A549 (cell line): ENCODE measurements at regions of chr19 and their contacts with region 1.

Region 1: GRCh38 chr19:47745010-47745901 is at the start of gene NOP53:
- DNase-seq: peak; percentile 99
- ATAC-seq: peak; percentile 64 to 75
- H3K4me3 ChIP-seq: peak within 1 kb of the TSS; percentile 56
- H3K27ac ChIP-seq: peak within 1 kb of the TSS; percentile 95 to 96
- H3K4me1 ChIP-seq: peaks cover 33% of the 10 kb centered on the region
- CTCF ChIP-seq: no peak
- EP300 ChIP-seq: no peak
- POLR2A ChIP-seq: peak; percentile 76
- RAD21 ChIP-seq: no peak
- polyA plus RNA-seq, gene NOP53: 169 and 182 TPM in 2 replicates

Region 2: GRCh38 chr19:47713046-47714021 is 31.9 kb before region 1 on chr19 and contains the start of gene EHD2:
- CTCF ChIA-PET with region 1: interaction called, 1,389 read pairs
- POLR2A ChIA-PET with region 1: interaction called, 69 read pairs
- DNase-seq: peak; percentile 69 to 84
- ATAC-seq: peak; percentile 83 to 92
- H3K4me3 ChIP-seq: peak within 1 kb of the TSS; percentile 89
- H3K27ac ChIP-seq: peak within 1 kb of the TSS; percentile 97 to 99
- H3K4me1 ChIP-seq: peaks cover 4% of the 10 kb centered on the region
- CTCF ChIP-seq: peak; percentile 99
- EP300 ChIP-seq: no peak
- POLR2A ChIP-seq: peak; percentile 82
- RAD21 ChIP-seq: peak; percentile 99 to 100
- polyA plus RNA-seq, gene EHD2: 32.3 and 36.9 TPM in 2 replicates

Region 3: DNA sequence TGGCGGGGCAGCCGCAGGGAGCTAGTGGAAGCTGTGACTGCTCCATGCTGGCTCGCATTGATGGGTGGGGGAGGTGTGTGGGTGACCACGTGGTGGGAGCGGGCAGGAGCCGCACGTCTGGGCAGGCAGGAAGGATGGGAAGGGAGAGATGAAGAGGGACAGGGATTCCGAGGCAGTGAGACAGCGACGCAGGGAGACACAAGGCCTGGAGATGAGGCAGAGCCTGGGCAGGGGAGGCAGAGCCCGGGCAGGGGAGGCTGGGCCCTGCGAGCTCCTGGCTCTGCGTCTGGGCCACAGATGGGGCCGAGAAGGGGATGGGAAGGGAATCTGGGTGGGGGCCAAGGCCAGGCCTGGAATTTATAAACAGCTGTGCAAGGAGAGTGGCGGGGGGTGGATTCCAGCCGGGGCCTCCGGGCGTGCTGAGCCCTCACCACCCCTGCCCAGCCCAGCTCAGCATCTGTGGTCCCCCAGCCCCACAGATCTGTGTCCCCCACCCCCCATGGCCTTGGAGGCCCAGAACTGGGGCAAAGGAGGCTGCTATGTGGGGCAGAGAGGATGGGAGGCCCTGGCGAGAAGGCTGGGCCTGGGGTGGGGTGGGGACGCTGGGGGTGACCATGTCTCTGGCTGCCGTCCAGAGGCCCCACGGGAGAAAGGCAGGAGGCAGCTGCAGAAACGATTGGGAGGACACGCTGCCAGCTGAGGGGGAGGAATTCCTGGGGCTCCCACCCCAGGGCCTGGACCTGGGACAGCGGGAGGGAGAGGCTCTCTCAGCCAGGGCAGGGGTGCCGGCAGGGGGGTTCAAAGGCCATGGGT is 26.0 kb before region 1 on chr19:
- CTCF ChIA-PET with region 1: interaction called, 1,389 read pairs
- POLR2A ChIA-PET with region 1: interaction called, 69 read pairs
- DNase-seq: peak; percentile 79 to 91
- ATAC-seq: peak; percentile 85 to 86
- H3K4me3 ChIP-seq: peak overlapping the region; percentile 17; the same call in 2 of the 3 replicates
- H3K27ac ChIP-seq: peak overlapping the region; percentile 96 to 99
- H3K4me1 ChIP-seq: peaks cover 58% of the 10 kb centered on the region
- CTCF ChIP-seq: no peak
- EP300 ChIP-seq: 0 out of 5 replicates have a peak, but pooled peaks of 1 of the 2 experiments have one; percentile 20
- POLR2A ChIP-seq: no peak
- RAD21 ChIP-seq: no peak

Region 4: DNA sequence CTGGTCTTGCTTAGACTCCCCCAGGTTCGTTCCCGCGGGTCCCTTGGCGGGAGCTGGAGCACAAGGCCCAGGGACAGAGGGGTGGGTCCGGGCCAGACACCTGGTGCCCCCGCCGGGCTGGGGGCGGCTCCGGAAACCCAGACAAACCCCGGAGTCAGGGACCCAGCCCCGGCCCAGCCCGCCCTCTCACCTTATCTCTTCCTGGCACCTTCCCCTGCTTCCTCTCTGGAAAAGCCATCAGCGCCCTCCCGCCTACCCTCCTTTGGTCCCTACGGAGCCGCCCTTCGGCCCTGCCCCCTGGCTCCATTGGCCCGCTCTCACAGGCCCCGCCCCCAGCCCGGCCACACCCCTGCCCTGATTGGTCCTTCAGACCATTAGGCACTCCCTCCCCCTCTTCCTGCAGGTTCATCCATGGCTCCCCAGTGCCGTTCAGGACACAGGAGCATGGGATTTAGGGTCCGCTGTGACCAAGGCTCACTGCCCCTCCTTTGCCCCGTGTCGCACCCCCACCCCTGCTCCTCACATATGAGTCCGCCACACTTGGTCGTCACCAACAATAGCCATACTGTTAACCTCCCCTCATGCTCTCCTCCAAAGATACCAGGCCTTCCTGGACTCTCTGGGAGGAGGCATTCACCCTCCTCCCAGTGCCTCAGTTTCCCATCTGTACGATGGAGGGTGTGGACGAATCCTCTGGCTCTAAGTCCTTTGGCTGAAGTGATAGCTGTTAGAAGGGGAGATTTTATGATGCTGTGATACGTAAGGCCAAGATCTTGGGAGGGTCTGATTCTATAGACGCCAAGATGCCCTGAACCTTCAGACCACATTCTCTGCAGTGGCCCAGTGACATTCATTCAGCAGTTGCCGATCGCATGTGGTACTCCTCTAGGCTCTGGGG is 15.0 kb before region 1 on chr19:
- CTCF ChIA-PET with region 1: interaction called, 64 read pairs
- POLR2A ChIA-PET with region 1: interaction called, 14 read pairs
- DNase-seq: peak; percentile 87 to 93
- ATAC-seq: peak; percentile 79 to 84
- H3K4me3 ChIP-seq: peak overlapping the region; percentile 48
- H3K27ac ChIP-seq: peak overlapping the region; percentile 83 to 94
- H3K4me1 ChIP-seq: peaks cover 48% of the 10 kb centered on the region
- CTCF ChIP-seq: no peak
- EP300 ChIP-seq: no peak
- POLR2A ChIP-seq: 0 out of 2 replicates have a peak, but pooled peaks have one; percentile 15
- RAD21 ChIP-seq: no peak; a peak in 1 of 5 replicates

Region 5: DNA sequence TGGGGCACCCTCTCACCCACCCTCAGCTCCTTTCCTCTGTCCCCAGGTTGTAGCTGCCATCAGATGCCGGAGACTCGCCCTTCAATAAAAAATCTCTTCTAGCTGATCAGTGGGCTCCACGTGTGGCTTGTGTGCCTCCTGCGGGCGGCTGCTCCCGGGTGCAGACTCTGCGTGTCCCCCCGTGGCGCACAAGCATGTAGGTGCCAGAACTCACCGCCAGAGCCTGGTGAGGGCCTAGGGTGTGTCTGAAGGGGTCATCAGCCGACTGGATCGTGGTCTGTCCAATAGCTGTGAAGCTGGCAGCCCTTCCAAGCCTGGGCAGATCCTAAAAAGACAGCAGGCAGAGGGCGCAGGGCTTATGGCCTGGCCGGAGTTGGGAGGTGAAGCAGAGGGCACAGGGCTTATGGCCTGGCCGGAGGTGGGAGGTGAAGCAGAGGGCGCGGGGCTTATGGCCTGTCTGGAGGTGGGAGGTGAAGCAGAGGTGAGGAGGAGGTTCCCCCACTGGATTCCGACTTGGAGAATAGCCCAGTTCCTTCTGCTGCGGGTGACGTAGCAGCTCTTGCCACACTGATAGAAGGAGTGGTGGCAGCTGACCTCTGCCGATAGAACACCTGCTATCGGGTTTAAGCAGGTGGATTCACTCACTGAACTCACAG is 11.8 kb after region 1 on chr19:
- CTCF ChIA-PET with region 1: interaction called, 145 read pairs
- POLR2A ChIA-PET with region 1: interaction called, 6 read pairs
- DNase-seq: no peak
- ATAC-seq: peak; percentile 5 to 11; a peak in 3 of 6 replicates
- H3K4me3 ChIP-seq: no peak overlapping the region
- H3K27ac ChIP-seq: no peak overlapping the region
- H3K4me1 ChIP-seq: no peaks in the 10 kb centered on the region; the same call in 2 of the 3 replicates
- CTCF ChIP-seq: no peak
- EP300 ChIP-seq: no peak
- POLR2A ChIP-seq: no peak
- RAD21 ChIP-seq: no peak

Region 6: GRCh38 chr19:47765523-47766358 is 20.5 kb after region 1 on chr19:
- CTCF ChIA-PET with region 1: interaction called, 145 read pairs
- POLR2A ChIA-PET with region 1: interaction called, 3 read pairs
- DNase-seq: peak; percentile 58 to 74
- ATAC-seq: peak; percentile 66 to 85
- H3K4me3 ChIP-seq: no peak overlapping the region
- H3K27ac ChIP-seq: no peak overlapping the region
- H3K4me1 ChIP-seq: no peaks in the 10 kb centered on the region
- CTCF ChIP-seq: peak; percentile 83
- EP300 ChIP-seq: no peak
- POLR2A ChIP-seq: no peak
- RAD21 ChIP-seq: peak; percentile 61 to 84